CD8-positive, alpha-beta T cell (primary cell): ENCODE measurements at regions of chr1 and their contacts with region 1.

Region 1: GRCh38 chr1:25895365-25895993 is 10.7 kb downstream of the STMN1 start:
- DNase-seq: peak; percentile 86 to 96 (median 92)
- ATAC-seq: peak; percentile 100
- H3K4me3 ChIP-seq: no peak overlapping the region
- H3K4me3 Mint-ChIP-seq: no peak overlapping the region
- H3K27ac ChIP-seq: no peak overlapping the region
- H3K27ac Mint-ChIP-seq: no peak overlapping the region
- H3K4me1 ChIP-seq: peaks cover 6% of the 10 kb centered on the region
- H3K4me1 Mint-ChIP-seq: peaks cover 9% of the 10 kb centered on the region
- H3K27me3 ChIP-seq: no peaks in the 10 kb centered on the region
- H3K27me3 Mint-ChIP-seq: no peaks in the 10 kb centered on the region
- CTCF ChIP-seq: peak; percentile 99

Region 2: GRCh38 chr1:25858906-25859789 is 36.3 kb before region 1 on chr1 and contains the start of gene AUNIP:
- CTCF ChIA-PET with region 1: interaction called, 4 read pairs
- POLR2A ChIA-PET with region 1: no interaction called
- intact Hi-C with region 1: loop called in 1 of 2 experiments (anchors 1 kb)
- DNase-seq: peak; percentile 72 to 95 (median 88)
- ATAC-seq: peak; percentile 99
- H3K4me3 ChIP-seq: peak within 1 kb of the TSS; percentile 63 to 75
- H3K4me3 Mint-ChIP-seq: peak within 1 kb of the TSS; percentile 92
- H3K27ac ChIP-seq: peak within 1 kb of the TSS; percentile 66 to 71
- H3K27ac Mint-ChIP-seq: peak within 1 kb of the TSS; percentile 89
- H3K4me1 ChIP-seq: peaks cover 16% of the 10 kb centered on the region
- H3K4me1 Mint-ChIP-seq: peaks cover 15% of the 10 kb centered on the region
- H3K27me3 ChIP-seq: no peaks in the 10 kb centered on the region
- H3K27me3 Mint-ChIP-seq: no peaks in the 10 kb centered on the region
- CTCF ChIP-seq: no peak
- total RNA-seq, gene AUNIP: 0.30 TPM in 1 of 2 experiments, not detected in the other

Region 3: GRCh38 chr1:25905680-25906643 is 10.5 kb after region 1 on chr1 and contains the start of gene STMN1:
- CTCF ChIA-PET with region 1: interaction called, 58 read pairs
- POLR2A ChIA-PET with region 1: interaction called, 21 read pairs
- intact Hi-C with region 1: loop called in 1 of 2 experiments (anchors 1 kb)
- DNase-seq: peak; percentile 77 to 93 (median 88)
- ATAC-seq: peak; percentile 72
- H3K4me3 ChIP-seq: peak within 1 kb of the TSS; percentile 63 to 68
- H3K4me3 Mint-ChIP-seq: peak within 1 kb of the TSS; percentile 95
- H3K27ac ChIP-seq: peak within 1 kb of the TSS; percentile 70 to 71
- H3K27ac Mint-ChIP-seq: peak within 1 kb of the TSS; percentile 95
- H3K4me1 ChIP-seq: peaks cover 8% of the 10 kb centered on the region
- H3K4me1 Mint-ChIP-seq: peaks cover 18% of the 10 kb centered on the region
- H3K27me3 ChIP-seq: no peaks in the 10 kb centered on the region
- H3K27me3 Mint-ChIP-seq: no peaks in the 10 kb centered on the region
- CTCF ChIP-seq: no peak
- total RNA-seq, gene STMN1: 18.5 to 19.6 TPM

Region 4: GRCh38 chr1:25971066-25971810 is 75.8 kb after region 1 on chr1:
- CTCF ChIA-PET with region 1: interaction called, 14 read pairs
- POLR2A ChIA-PET with region 1: interaction called, 4 read pairs
- intact Hi-C with region 1: loop called in 1 of 2 experiments (anchors 1 kb)
- DNase-seq: peak in 4 of 9 experiments; percentile 22 to 61 (median 40)
- ATAC-seq: peak; percentile 75
- H3K4me3 ChIP-seq: no peak overlapping the region
- H3K4me3 Mint-ChIP-seq: peak overlapping the region; percentile 56
- H3K27ac ChIP-seq: peak overlapping the region in 1 of 2 experiments; percentile 55
- H3K27ac Mint-ChIP-seq: peak overlapping the region; percentile 88
- H3K4me1 ChIP-seq: peaks cover 20% of the 10 kb centered on the region
- H3K4me1 Mint-ChIP-seq: peaks cover 31% of the 10 kb centered on the region
- H3K27me3 ChIP-seq: no peaks in the 10 kb centered on the region
- H3K27me3 Mint-ChIP-seq: no peaks in the 10 kb centered on the region
- CTCF ChIP-seq: no peak

Region 5: GRCh38 chr1:26035959-26036755 is 140.7 kb after region 1 on chr1:
- CTCF ChIA-PET with region 1: interaction called, 15 read pairs
- POLR2A ChIA-PET with region 1: interaction called, 3 read pairs
- intact Hi-C with region 1: loop called in 1 of 2 experiments (anchors 1 kb)
- DNase-seq: peak; percentile 53 to 88 (median 79)
- ATAC-seq: peak; percentile 70
- H3K4me3 ChIP-seq: peak overlapping the region; percentile 85 to 86
- H3K4me3 Mint-ChIP-seq: peak overlapping the region; percentile 97
- H3K27ac ChIP-seq: peak overlapping the region; percentile 46 to 58
- H3K27ac Mint-ChIP-seq: peak overlapping the region; percentile 95
- H3K4me1 ChIP-seq: peaks cover 11% of the 10 kb centered on the region
- H3K4me1 Mint-ChIP-seq: peaks cover 8% of the 10 kb centered on the region
- H3K27me3 ChIP-seq: no peaks in the 10 kb centered on the region
- H3K27me3 Mint-ChIP-seq: no peaks in the 10 kb centered on the region
- CTCF ChIP-seq: peak; percentile 99

Region 6: DNA sequence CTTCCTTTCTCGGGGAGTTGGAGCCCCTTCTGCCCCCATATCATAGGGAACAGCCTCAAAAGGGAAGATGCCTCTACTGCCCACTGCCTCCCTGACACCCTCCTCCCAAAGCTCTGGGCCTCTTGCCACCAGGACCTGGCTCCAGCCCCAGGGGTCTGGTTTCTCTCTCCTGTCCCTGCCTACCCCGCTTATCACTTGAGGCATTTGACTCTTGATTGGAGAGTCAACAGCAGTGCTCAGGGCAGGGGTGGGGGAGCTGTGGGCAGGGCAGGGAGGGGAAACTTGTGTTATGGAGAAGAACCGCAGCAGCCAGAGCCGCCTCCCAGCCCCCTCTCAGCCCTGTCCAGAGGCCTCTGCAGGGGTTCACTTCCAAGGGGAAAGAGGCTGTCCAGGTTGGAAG is 171.4 kb after region 1 on chr1:
- CTCF ChIA-PET with region 1: no interaction called
- POLR2A ChIA-PET with region 1: no interaction called
- intact Hi-C with region 1: no loop called
- DNase-seq: no peak
- ATAC-seq: no peak
- H3K4me3 ChIP-seq: no peak overlapping the region
- H3K4me3 Mint-ChIP-seq: no peak overlapping the region
- H3K27ac ChIP-seq: no peak overlapping the region
- H3K27ac Mint-ChIP-seq: no peak overlapping the region
- H3K4me1 ChIP-seq: no peaks in the 10 kb centered on the region
- H3K4me1 Mint-ChIP-seq: no peaks in the 10 kb centered on the region
- H3K27me3 ChIP-seq: no peaks in the 10 kb centered on the region
- H3K27me3 Mint-ChIP-seq: peaks cover 6% of the 10 kb centered on the region
- CTCF ChIP-seq: no peak